ENCODE measurements at regions of chr15 and their contacts with region 1.

Region 1: GRCh38 chr15:44501768-44502366 is 35.1 kb upstream of the EIF3J start:
- DNase-seq: no peak
- ATAC-seq: peak; percentile 80
- H3K4me3 ChIP-seq: no peak overlapping the region
- H3K27ac ChIP-seq: no peak overlapping the region
- H3K4me1 ChIP-seq: no peaks in the 10 kb centered on the region
- H3K27me3 ChIP-seq: no peaks in the 10 kb centered on the region
- CTCF ChIP-seq: peak; percentile 46 to 61 (median 54)
- EP300 ChIP-seq: no peak
- POLR2A ChIP-seq: no peak
- RAD21 ChIP-seq: peak; percentile 74

Region 2: GRCh38 chr15:43903864-43904290 is 598.0 kb before region 1 on chr15:
- CTCF ChIA-PET with region 1: interaction called, 10 read pairs
- POLR2A ChIA-PET with region 1: no interaction called
- RAD21 ChIA-PET with region 1: interaction called, 3 read pairs
- SMC1A ChIA-PET with region 1: interaction called, 10 read pairs
- in situ Hi-C with region 1: no loop called
- intact Hi-C with region 1: no loop called
- DNase-seq: peak; percentile 7
- ATAC-seq: peak; percentile 97
- H3K4me3 ChIP-seq: no peak overlapping the region
- H3K27ac ChIP-seq: no peak overlapping the region
- H3K4me1 ChIP-seq: no peaks in the 10 kb centered on the region
- H3K27me3 ChIP-seq: no peaks in the 10 kb centered on the region
- CTCF ChIP-seq: peak; percentile 75 to 89 (median 82)
- EP300 ChIP-seq: no peak
- POLR2A ChIP-seq: no peak
- RAD21 ChIP-seq: peak; percentile 99

Region 3: GRCh38 chr15:44215594-44215993 is 286.3 kb before region 1 on chr15:
- CTCF ChIA-PET with region 1: interaction called, 4 read pairs
- POLR2A ChIA-PET with region 1: no interaction called
- RAD21 ChIA-PET with region 1: no interaction called
- SMC1A ChIA-PET with region 1: interaction called, 5 read pairs
- in situ Hi-C with region 1: no loop called
- intact Hi-C with region 1: loop called (anchors 10 kb)
- DNase-seq: no peak
- ATAC-seq: no peak
- H3K4me3 ChIP-seq: no peak overlapping the region
- H3K27ac ChIP-seq: no peak overlapping the region
- H3K4me1 ChIP-seq: no peaks in the 10 kb centered on the region
- H3K27me3 ChIP-seq: no peaks in the 10 kb centered on the region
- CTCF ChIP-seq: no peak
- EP300 ChIP-seq: no peak
- POLR2A ChIP-seq: no peak
- RAD21 ChIP-seq: no peak

Region 4: GRCh38 chr15:44325568-44325967 is 176.3 kb before region 1 on chr15:
- CTCF ChIA-PET with region 1: interaction called, 11 read pairs
- POLR2A ChIA-PET with region 1: no interaction called
- RAD21 ChIA-PET with region 1: interaction called, 14 read pairs
- SMC1A ChIA-PET with region 1: interaction called, 9 read pairs
- in situ Hi-C with region 1: no loop called
- intact Hi-C with region 1: loop called (anchors 10 kb)
- DNase-seq: no peak
- ATAC-seq: no peak
- H3K4me3 ChIP-seq: no peak overlapping the region
- H3K27ac ChIP-seq: peak overlapping the region; percentile 1; the same call in 1 of the 2 replicates
- H3K4me1 ChIP-seq: peaks cover 17% of the 10 kb centered on the region
- H3K27me3 ChIP-seq: no peaks in the 10 kb centered on the region
- CTCF ChIP-seq: no peak
- EP300 ChIP-seq: no peak
- POLR2A ChIP-seq: no peak
- RAD21 ChIP-seq: no peak

Region 5: GRCh38 chr15:44370830-44371229 is 131.0 kb before region 1 on chr15:
- CTCF ChIA-PET with region 1: interaction called, 12 read pairs
- POLR2A ChIA-PET with region 1: no interaction called
- RAD21 ChIA-PET with region 1: interaction called, 13 read pairs
- SMC1A ChIA-PET with region 1: interaction called, 15 read pairs
- in situ Hi-C with region 1: no loop called
- intact Hi-C with region 1: no loop called
- DNase-seq: peak; percentile 3
- ATAC-seq: peak; percentile 82
- H3K4me3 ChIP-seq: no peak overlapping the region
- H3K27ac ChIP-seq: no peak overlapping the region
- H3K4me1 ChIP-seq: no peaks in the 10 kb centered on the region
- H3K27me3 ChIP-seq: no peaks in the 10 kb centered on the region
- CTCF ChIP-seq: peak in 2 of 3 experiments; percentile 16 to 24; a peak in 1 of 6 replicates
- EP300 ChIP-seq: no peak
- POLR2A ChIP-seq: no peak
- RAD21 ChIP-seq: peak; percentile 35; the same call in 1 of the 2 replicates

Region 6: GRCh38 chr15:44426975-44427755 is 74.7 kb before region 1 on chr15 and contains the start of gene CTDSPL2:
- CTCF ChIA-PET with region 1: interaction called, 9 read pairs
- POLR2A ChIA-PET with region 1: no interaction called
- RAD21 ChIA-PET with region 1: interaction called, 17 read pairs
- SMC1A ChIA-PET with region 1: interaction called, 13 read pairs
- in situ Hi-C with region 1: no loop called
- intact Hi-C with region 1: no loop called
- DNase-seq: peak; percentile 91
- ATAC-seq: peak; percentile 97
- H3K4me3 ChIP-seq: peak within 1 kb of the TSS; percentile 80
- H3K27ac ChIP-seq: peak within 1 kb of the TSS; percentile 93
- H3K4me1 ChIP-seq: no peaks in the 10 kb centered on the region
- H3K27me3 ChIP-seq: no peaks in the 10 kb centered on the region
- CTCF ChIP-seq: peak; percentile 24 to 39 (median 37); a peak in 5 of 6 replicates
- EP300 ChIP-seq: 0 out of 4 replicates have a peak, but pooled peaks of 1 of the 2 experiments have one; percentile 13
- POLR2A ChIP-seq: peak; percentile 93
- RAD21 ChIP-seq: no peak
- polyA plus RNA-seq, gene CTDSPL2: 10.7 to 14.3 TPM

Region 7: GRCh38 chr15:44482088-44482487 is 19.8 kb before region 1 on chr15:
- CTCF ChIA-PET with region 1: interaction called, 13 read pairs
- POLR2A ChIA-PET with region 1: interaction called, 7 read pairs
- RAD21 ChIA-PET with region 1: interaction called, 3 read pairs
- SMC1A ChIA-PET with region 1: interaction called, 3 read pairs
- in situ Hi-C with region 1: no loop called
- intact Hi-C with region 1: no loop called
- DNase-seq: no peak
- ATAC-seq: no peak
- H3K4me3 ChIP-seq: no peak overlapping the region
- H3K27ac ChIP-seq: no peak overlapping the region
- H3K4me1 ChIP-seq: peaks cover 6% of the 10 kb centered on the region; the same call in 1 of the 2 replicates
- H3K27me3 ChIP-seq: no peaks in the 10 kb centered on the region
- CTCF ChIP-seq: no peak
- EP300 ChIP-seq: no peak
- POLR2A ChIP-seq: no peak
- RAD21 ChIP-seq: no peak

Region 8: GRCh38 chr15:44593042-44593736 is 91.3 kb after region 1 on chr15:
- CTCF ChIA-PET with region 1: no interaction called
- POLR2A ChIA-PET with region 1: no interaction called
- RAD21 ChIA-PET with region 1: no interaction called
- SMC1A ChIA-PET with region 1: no interaction called
- in situ Hi-C with region 1: no loop called
- intact Hi-C with region 1: no loop called
- DNase-seq: no peak
- ATAC-seq: peak; percentile 72
- H3K4me3 ChIP-seq: no peak overlapping the region
- H3K27ac ChIP-seq: no peak overlapping the region
- H3K4me1 ChIP-seq: peaks cover 7% of the 10 kb centered on the region; the same call in 1 of the 2 replicates
- H3K27me3 ChIP-seq: no peaks in the 10 kb centered on the region
- CTCF ChIP-seq: peak; percentile 42 to 54 (median 42); a peak in 5 of 6 replicates
- EP300 ChIP-seq: no peak
- POLR2A ChIP-seq: no peak
- RAD21 ChIP-seq: peak; percentile 53

Region 9: GRCh38 chr15:45307230-45307924 is 805.5 kb after region 1 on chr15:
- CTCF ChIA-PET with region 1: no interaction called
- POLR2A ChIA-PET with region 1: no interaction called
- RAD21 ChIA-PET with region 1: no interaction called
- SMC1A ChIA-PET with region 1: no interaction called
- in situ Hi-C with region 1: no loop called
- intact Hi-C with region 1: no loop called
- DNase-seq: peak; percentile 31
- ATAC-seq: peak; percentile 71
- H3K4me3 ChIP-seq: peak overlapping the region; percentile 60; the same call in 1 of the 2 replicates
- H3K27ac ChIP-seq: no peak overlapping the region
- H3K4me1 ChIP-seq: no peaks in the 10 kb centered on the region
- H3K27me3 ChIP-seq: no peaks in the 10 kb centered on the region
- CTCF ChIP-seq: peak; percentile 39 to 65 (median 58); a peak in 5 of 6 replicates
- EP300 ChIP-seq: no peak
- POLR2A ChIP-seq: no peak
- RAD21 ChIP-seq: peak; percentile 58

Measured in GM12878 (cell line).